Naive thymus-derived CD8-positive, alpha-beta T cell (primary cell): ENCODE measurements at regions of chr4 and their contacts with region 1.

Region 1: GRCh38 chr4:165343353-165344191 is 16.1 kb downstream of the MSMO1 start:
- DNase-seq: peak in 1 of 10 donors; percentile 28
- ATAC-seq: no peak
- H3K4me3 Mint-ChIP-seq: no peak overlapping the region
- H3K27ac Mint-ChIP-seq: peak overlapping the region in 3 of 10 donors; percentile 32 to 52 (median 39)
- H3K4me1 Mint-ChIP-seq: no peaks in the 10 kb centered on the region
- H3K27me3 Mint-ChIP-seq: no peaks in the 10 kb centered on the region

Region 2: GRCh38 chr4:165131247-165131832 is 212.2 kb before region 1 on chr4:
- POLR2A ChIA-PET with region 1: interaction called, 12 read pairs
- DNase-seq: peak; percentile 55 to 85 (median 75)
- ATAC-seq: peak; percentile 80
- H3K4me3 Mint-ChIP-seq: no peak overlapping the region
- H3K27ac Mint-ChIP-seq: peak overlapping the region in 1 of 10 donors; percentile 36
- H3K4me1 Mint-ChIP-seq: peaks cover 3 to 21% (median 8%) of the 10 kb centered on the region in 4 donors
- H3K27me3 Mint-ChIP-seq: peaks cover 0 to 10% (median 2%) of the 10 kb centered on the region in 5 donors

Region 3: DNA sequence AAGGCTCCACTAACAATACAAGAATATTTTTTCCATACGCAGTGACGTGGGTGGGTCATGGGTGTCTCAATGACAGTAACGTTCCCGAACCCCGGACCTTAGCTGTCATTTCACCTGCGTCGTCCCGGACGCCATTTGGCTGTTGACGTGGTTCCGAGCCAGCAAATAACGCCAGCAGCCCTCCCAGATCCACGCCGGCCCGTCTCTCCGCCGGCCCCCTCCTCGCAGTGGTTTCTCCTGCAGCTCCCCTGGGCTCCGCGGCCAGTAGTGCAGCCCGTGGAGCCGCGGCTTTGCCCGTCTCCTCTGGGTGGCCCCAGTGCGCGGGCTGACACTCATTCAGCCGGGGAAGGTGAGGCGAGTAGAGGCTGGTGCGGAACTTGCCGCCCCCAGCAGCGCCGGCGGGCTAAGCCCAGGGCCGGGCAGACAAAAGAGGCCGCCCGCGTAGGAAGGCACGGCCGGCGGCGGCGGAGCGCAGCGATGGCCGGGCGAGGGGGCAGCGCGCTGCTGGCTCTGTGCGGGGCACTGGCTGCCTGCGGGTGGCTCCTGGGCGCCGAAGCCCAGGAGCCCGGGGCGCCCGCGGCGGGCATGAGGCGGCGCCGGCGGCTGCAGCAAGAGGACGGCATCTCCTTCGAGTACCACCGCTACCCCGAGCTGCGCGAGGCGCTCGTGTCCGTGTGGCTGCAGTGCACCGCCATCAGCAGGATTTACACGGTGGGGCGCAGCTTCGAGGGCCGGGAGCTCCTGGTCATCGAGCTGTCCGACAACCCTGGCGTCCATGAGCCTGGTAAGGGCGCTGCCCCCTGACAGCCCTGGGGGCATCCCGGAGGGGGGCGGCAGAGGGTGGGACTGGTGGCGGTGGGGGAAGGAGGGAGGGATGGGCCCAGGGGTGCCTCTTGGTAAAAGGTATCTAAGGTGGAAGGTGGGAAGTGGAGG is 35.4 kb after region 1 on chr4 and contains the start of gene CPE:
- POLR2A ChIA-PET with region 1: no interaction called
- DNase-seq: peak; percentile 29 to 80 (median 56)
- ATAC-seq: peak; percentile 97 to 98
- H3K4me3 Mint-ChIP-seq: peak within 1 kb of the TSS; percentile 71 to 89 (median 80)
- H3K27ac Mint-ChIP-seq: peak within 1 kb of the TSS in 1 of 10 donors; percentile 52
- H3K4me1 Mint-ChIP-seq: peaks cover 8 to 16% (median 14%) of the 10 kb centered on the region in 4 donors
- H3K27me3 Mint-ChIP-seq: peaks cover 27 to 63% (median 36%) of the 10 kb centered on the region in 5 donors
- polyA plus RNA-seq, gene CPE: 0.16 TPM in 1 of 3 donors, not detected in the others

Region 4: DNA sequence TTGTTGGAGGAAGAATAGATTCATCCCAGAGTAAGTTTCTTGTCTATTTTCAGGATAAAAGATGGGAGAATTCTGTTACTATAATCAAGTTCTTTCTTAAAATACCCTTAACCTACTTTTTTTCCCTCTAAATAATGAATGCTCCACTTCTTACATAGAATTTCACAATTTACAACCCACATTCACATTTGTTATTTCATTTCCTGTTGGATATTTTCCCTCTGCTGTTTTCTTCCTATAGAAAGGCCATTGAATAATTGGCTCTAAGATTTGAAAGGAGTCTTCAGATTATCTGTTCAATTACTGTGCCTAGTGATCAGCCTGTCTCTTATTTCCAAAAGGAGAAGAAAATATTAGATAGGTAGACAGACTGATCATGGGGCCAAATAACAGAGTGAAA is 114.9 kb after region 1 on chr4:
- POLR2A ChIA-PET with region 1: no interaction called
- DNase-seq: no peak
- ATAC-seq: no peak
- H3K4me3 Mint-ChIP-seq: no peak overlapping the region
- H3K27ac Mint-ChIP-seq: no peak overlapping the region
- H3K4me1 Mint-ChIP-seq: no peaks in the 10 kb centered on the region
- H3K27me3 Mint-ChIP-seq: peaks cover 0 to 11% (median 11%) of the 10 kb centered on the region in 5 donors